Cardiac septum (tissue), 1 donor: ENCODE measurements at regions of chr13 and their contacts with region 1.

Region 1: GRCh38 chr13:31424117-31424729 is 224.4 kb downstream of the B3GLCT start:
- DNase-seq: no peak

Region 2: DNA sequence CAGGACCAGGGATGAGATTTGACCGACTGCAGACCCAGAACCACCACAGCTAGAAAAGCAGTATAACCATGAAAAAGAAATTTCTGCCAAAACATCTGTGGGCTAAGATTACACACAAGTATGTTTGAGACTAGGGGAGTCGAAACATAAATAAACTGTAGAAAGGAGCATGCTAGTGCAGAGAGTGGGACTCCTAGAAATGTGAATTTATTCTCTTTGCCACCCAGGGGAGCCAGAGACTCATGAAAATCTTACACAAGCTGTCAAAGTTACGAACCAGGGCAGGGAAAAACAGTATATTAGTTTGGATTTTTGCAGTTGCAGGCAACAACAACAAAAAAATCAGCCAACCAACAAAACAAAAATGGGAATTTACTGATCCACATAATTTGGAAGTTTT is 250.2 kb before region 1 on chr13:
- intact Hi-C with region 1: loop called (anchors 5 kb)
- DNase-seq: no peak

Region 3: GRCh38 chr13:31199849-31200636 is 224.2 kb before region 1 on chr13 and contains the start of gene B3GLCT:
- intact Hi-C with region 1: loop called (anchors 2 kb)
- DNase-seq: peak; percentile 93
- total RNA-seq, gene B3GLCT: 17.5 TPM

Region 4: DNA sequence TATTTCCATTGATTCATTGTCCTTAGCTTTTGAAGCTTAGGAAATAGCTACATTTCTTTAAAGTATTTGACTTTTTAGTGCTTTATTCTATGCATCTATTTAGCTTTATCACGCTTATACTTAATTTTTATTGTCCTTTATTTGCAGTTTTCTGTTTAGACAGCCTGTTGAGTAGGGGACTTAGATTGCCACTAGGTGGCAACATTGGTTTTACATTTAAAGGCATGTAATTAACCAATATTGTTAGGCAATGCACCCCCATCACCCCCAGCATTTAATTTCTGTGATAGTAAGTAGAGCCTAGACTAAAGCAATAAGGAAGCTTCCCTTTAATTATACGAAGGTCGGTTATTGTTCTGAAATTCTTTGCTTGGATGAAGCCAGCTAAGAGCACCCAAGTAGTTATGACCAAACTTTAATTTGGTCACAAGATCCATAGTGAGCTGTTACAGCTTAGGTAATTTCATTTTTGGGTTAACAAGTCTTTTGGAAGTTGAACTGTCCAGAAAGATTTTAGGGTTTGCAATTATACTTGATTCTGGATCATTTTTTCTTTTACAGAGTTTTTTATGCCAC is 187.9 kb before region 1 on chr13:
- intact Hi-C with region 1: loop called (anchors 2 kb)
- DNase-seq: no peak